ENCODE measurements at regions of chr17 and their contacts with region 1.

Region 1: DNA sequence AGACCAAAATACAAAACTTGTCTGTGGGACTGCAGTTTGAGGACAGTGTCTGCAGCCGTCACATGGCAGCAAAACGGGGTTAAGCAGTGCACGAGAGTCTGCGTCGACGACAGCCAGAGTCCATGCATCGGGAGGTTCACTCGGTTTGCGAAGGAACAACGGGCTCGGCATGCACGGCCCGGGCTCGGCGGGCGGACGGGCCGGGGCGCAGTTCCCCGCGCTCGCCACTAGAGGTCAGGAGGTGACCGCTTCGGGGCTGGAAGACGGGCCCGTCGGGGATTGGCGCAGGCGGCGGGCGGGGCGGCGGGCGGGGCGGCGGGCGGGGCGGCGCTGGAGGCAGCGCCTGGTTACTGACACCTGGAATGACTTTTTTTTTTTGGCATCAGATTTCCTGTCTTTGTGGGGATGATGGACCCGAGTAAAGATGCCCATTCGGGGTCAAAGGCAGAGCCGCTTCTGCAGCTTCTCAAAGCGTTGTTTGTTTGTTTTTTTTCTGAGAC is 6.5 kb downstream of the SCGB1C2 start:
- H3K4me3 Mint-ChIP-seq: no peak overlapping the region
- H3K27ac Mint-ChIP-seq: no peak overlapping the region
- H3K4me1 Mint-ChIP-seq: no peaks in the 10 kb centered on the region
- H3K27me3 Mint-ChIP-seq: peaks cover 22% of the 10 kb centered on the region

Region 2: GRCh38 chr17:259991-260791 is 116.4 kb after region 1 on chr17:
- intact Hi-C with region 1: no loop called
- H3K4me3 Mint-ChIP-seq: no peak overlapping the region
- H3K27ac Mint-ChIP-seq: no peak overlapping the region
- H3K4me1 Mint-ChIP-seq: peaks cover 9% of the 10 kb centered on the region
- H3K27me3 Mint-ChIP-seq: peaks cover 24% of the 10 kb centered on the region

Region 3: GRCh38 chr17:385926-386876 is 242.4 kb after region 1 on chr17:
- intact Hi-C with region 1: loop called (anchors 2 kb)
- H3K4me3 Mint-ChIP-seq: peak overlapping the region; percentile 62
- H3K27ac Mint-ChIP-seq: no peak overlapping the region
- H3K4me1 Mint-ChIP-seq: peaks cover 23% of the 10 kb centered on the region
- H3K27me3 Mint-ChIP-seq: peaks cover 68% of the 10 kb centered on the region

Region 4: DNA sequence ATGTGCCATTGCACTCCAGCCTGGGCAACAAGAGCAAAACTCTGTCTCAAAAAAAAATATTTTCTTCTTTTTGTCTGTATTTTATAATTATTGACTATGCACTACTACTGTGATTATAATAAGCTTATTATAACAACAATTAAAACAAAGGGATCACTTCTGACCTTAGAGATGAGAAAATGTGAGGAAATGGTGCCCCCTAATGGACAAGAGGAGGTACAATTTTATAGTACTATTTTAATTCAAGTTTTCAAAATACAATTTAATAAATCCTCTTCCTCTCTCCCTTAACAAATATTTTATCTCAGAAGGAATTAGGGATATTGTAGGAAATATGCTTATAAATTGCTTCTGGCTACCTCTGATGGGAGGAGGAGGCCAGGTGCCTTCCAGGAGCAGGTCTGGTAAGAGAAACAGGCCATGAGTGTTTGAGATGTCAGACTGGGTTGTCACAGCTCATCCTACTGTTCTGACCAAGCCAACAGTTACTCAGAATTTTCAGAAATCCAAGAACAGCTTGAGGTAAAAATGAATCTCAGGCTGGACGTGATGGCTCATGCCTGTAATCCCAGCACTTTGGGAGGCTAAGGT is 556.8 kb after region 1 on chr17:
- intact Hi-C with region 1: loop called (anchors 5 kb)
- H3K4me3 Mint-ChIP-seq: no peak overlapping the region
- H3K27ac Mint-ChIP-seq: no peak overlapping the region
- H3K4me1 Mint-ChIP-seq: peaks cover 21% of the 10 kb centered on the region
- H3K27me3 Mint-ChIP-seq: no peaks in the 10 kb centered on the region

Measured in dendritic cell treated with granulocyte-macrophage colony-stimulating factor and Interleukin-4, amounts not matched to agents 40 ng/mL and 50 ng/mL, for 4 days (primary cell).